ENCODE measurements at regions of chr3 and their contacts with region 1.

Region 1: GRCh38 chr3:66971891-66972551 is 26.1 kb upstream of the KBTBD8 start:
- DNase-seq: peak; percentile 71
- ATAC-seq: peak; percentile 98

Region 2: GRCh38 chr3:66537735-66538134 is 434.3 kb before region 1 on chr3:
- intact Hi-C with region 1: no loop called
- DNase-seq: no peak
- ATAC-seq: no peak

Region 3: DNA sequence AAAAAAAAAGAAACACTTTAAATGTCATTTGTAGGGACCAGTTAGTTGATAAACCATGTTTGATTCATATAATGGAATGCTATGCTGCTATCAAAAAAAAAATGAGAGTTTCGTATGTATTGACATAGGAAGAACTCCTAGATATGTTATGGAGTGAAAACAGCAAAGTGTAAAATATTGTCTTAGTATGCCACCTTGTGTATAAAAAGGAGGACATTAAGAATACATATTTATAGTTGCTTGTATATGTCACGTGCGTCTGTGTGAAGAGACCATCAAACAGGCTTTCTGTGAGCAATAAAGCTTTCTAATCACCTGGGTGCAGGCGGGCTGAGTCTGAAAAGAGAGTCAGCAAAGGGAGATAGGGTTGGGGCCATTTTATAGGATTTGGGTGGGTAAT is 65.6 kb after region 1 on chr3:
- intact Hi-C with region 1: loop called (anchors 2 kb)
- DNase-seq: no peak
- ATAC-seq: peak; percentile 54

Region 4: DNA sequence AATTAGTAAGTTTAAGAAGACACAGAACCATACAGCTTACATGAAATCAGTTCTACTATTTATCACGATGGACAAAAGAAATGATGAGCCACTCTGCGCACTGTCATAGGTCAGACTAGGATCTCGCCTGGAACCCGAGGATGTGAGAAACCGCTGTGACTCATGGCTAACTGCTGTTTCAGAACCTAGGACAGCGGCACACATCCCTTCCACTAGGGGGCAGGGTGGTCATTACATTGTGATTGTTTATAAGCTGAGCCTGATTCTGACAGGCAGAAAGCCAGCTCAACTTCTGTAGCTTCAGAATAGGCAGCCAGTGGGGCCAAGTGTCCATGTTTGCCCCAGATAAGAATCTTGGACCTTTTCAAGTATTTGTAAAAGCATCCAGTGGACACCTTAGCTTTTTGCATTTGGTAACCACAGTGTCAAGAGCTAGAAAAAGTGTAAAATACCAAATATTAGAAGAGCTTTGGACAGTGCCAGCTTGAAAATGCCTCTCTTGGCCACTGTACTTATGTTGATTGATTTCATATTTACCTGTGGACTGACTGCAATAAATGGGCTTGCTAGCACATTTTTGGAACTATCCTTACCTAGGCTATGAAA is 141.9 kb after region 1 on chr3:
- intact Hi-C with region 1: loop called (anchors 10 kb)
- DNase-seq: no peak
- ATAC-seq: peak; percentile 63

Region 5: GRCh38 chr3:67526246-67526645 is 554.2 kb after region 1 on chr3:
- intact Hi-C with region 1: no loop called
- DNase-seq: no peak
- ATAC-seq: no peak

Region 6: DNA sequence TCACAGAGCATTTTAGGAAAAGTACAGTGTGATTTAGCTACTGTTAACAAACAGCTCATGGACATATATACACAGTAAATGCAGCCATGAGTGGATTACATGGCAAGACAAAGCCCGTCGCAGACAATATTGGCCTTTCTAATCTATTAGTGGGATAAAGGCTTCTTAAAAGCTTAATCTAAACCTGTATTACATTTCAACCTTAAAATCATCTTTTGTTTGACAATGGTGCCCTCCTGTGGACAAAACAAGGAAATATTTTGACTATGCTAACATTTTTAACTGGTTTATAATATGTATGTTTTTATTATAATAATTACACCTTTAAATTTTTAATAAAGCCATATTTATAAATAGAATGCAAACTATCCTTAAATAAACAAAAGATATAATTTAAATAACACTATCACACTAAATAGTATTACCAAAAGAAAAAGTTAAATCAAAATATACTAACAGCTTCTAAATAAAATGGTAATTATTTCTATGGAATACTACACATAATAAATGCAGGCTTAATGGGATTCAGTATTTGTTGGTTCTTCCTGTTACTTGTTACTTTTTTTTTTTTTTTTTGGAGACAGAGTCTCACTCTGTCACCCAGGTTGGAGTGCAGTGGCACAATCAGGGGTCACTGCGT is 1921.7 kb after region 1 on chr3:
- intact Hi-C with region 1: loop called (anchors 10 kb)
- DNase-seq: no peak
- ATAC-seq: no peak

Measured in Right ventricle myocardium inferior (tissue), 1 donor.